ENCODE measurements at regions of chrX and their contacts with region 1.

Region 1: DNA sequence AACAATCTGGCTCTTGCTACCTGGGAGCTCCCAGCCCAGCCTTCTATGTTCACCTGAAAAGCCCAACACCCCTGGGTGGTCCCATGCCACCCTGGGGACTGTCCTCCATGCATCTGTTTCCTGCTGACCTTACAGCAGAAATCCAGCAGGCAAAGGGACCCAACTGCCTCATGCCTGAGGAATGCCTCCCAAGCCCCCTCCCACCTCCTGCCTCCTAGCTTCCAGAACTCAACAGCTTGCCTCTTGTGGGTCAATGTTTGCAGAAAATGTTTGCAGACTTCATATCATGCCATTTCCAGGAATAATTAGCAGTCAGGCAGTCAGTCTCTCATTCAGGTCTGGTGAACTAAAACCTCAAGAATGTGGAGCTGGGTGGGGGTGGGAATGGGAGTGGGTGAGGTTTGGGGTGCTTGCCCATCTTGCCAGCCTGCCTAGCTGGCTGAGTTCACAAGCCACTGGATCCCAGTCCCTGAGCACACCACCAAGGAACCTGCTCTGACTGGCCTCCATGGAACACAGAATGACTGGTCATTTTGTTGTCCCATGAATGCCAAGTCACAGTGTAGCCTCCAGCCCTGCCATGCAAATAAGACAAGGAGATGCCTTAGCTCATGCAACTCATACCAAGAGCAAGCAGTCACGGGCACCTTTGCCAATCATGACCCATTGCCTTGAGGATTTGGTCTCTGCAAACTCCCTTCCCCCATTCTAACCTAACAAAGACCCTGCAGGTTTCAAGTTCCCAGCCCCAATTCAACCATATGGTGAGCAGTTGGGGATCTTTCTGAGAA is 12.1 kb upstream of the PLAC1 start:
- DNase-seq: peak; percentile 29
- H3K4me3 ChIP-seq: no peak overlapping the region
- H3K27ac ChIP-seq: peak overlapping the region; percentile 87
- H3K4me1 ChIP-seq: peaks cover 27% of the 10 kb centered on the region
- H3K27me3 ChIP-seq: no peaks in the 10 kb centered on the region
- CTCF ChIP-seq: no peak
- POLR2A ChIP-seq: no peak

Region 2: GRCh38 chrX:134572816-134573682 is 97.3 kb before region 1 on chrX:
- CTCF ChIA-PET with region 1: no interaction called
- POLR2A ChIA-PET with region 1: no interaction called
- dilution Hi-C with region 1: no loop called
- intact Hi-C with region 1: loop called (anchors 2 kb)
- DNase-seq: no peak
- H3K4me3 ChIP-seq: no peak overlapping the region
- H3K27ac ChIP-seq: no peak overlapping the region
- H3K4me1 ChIP-seq: peaks cover 19% of the 10 kb centered on the region
- H3K27me3 ChIP-seq: no peaks in the 10 kb centered on the region
- CTCF ChIP-seq: no peak
- POLR2A ChIP-seq: no peak

Region 3: DNA sequence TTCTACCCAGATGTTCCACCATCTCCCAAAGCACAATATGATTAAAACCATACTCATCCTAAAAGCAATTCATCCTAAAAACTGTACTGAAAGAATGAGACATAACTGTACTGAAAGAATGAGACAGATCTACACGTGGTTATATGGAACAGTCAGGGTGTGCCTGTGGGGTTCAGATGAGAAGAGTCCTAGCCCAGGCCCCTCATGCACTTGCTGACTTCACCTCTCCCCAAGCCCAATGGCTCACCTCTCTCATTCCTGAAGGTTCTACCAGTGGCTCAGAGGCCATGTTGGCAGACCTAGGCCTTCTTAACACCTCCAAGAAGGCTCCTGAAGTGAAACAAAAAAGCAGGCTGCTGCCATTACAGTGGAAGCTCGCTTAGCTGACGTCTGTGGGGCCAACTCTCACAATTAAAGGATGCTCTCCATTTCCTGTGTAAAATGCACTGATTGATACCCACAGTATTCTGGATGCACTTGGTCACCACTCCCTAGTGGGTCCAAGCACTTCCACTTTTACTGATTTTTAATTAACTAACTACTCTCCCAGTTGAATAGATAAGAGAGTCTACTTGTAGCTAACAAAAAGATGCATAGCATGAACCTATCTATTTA is 15.8 kb before region 1 on chrX:
- CTCF ChIA-PET with region 1: no interaction called
- POLR2A ChIA-PET with region 1: no interaction called
- dilution Hi-C with region 1: no loop called
- intact Hi-C with region 1: no loop called
- DNase-seq: no peak
- H3K4me3 ChIP-seq: no peak overlapping the region
- H3K27ac ChIP-seq: no peak overlapping the region
- H3K4me1 ChIP-seq: no peaks in the 10 kb centered on the region
- H3K27me3 ChIP-seq: no peaks in the 10 kb centered on the region
- CTCF ChIP-seq: no peak
- POLR2A ChIP-seq: no peak

Region 4: GRCh38 chrX:134753718-134754008 is 83.3 kb after region 1 on chrX:
- CTCF ChIA-PET with region 1: no interaction called
- POLR2A ChIA-PET with region 1: no interaction called
- dilution Hi-C with region 1: no loop called
- intact Hi-C with region 1: loop called (anchors 5 kb)
- DNase-seq: peak; percentile 53
- H3K4me3 ChIP-seq: no peak overlapping the region
- H3K27ac ChIP-seq: no peak overlapping the region
- H3K4me1 ChIP-seq: no peaks in the 10 kb centered on the region
- H3K27me3 ChIP-seq: no peaks in the 10 kb centered on the region
- CTCF ChIP-seq: peak in 1 of 2 donors; percentile 5
- POLR2A ChIP-seq: no peak